ENCODE measurements at regions of chr6 and their contacts with region 1.

Region 1: DNA sequence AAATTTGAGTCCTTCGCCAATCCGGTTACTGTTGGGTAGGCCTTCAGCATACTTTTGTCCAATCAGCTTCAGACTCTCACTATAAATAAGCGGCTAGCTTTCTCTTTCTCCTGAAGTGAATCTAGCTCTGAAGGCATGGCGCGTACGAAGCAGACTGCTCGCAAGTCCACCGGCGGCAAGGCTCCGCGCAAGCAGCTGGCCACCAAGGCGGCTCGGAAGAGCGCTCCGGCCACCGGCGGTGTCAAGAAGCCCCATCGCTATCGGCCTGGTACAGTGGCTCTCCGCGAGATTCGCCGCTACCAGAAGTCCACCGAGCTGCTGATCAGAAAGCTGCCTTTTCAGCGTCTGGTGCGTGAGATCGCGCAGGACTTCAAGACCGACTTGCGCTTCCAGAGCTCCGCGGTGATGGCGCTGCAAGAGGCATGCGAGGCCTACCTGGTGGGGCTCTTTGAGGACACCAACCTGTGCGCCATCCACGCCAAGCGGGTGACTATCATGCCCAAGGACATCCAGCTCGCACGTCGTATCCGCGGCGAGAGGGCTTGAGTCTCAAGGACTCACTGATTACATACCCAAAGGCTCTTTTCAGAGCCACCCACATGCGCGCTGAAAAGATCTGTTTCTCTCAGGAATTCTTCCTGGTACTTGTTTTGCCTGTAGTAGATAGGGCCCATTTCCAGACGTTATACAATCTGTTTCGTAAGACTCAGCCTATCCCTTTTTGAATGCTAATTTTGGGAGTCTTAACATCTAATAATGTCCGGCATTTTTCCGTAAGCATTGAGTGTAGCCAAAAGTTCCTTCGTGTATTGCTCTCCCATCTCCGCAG is 102.0 kb downstream of the OR2B2 start:
- DNase-seq: peak; percentile 64 to 93 (median 88)
- H3K4me3 ChIP-seq: peak overlapping the region; percentile 78
- H3K4me3 Mint-ChIP-seq: peak overlapping the region; percentile 85 to 97 (median 94)
- H3K27ac ChIP-seq: peak overlapping the region; percentile 93
- H3K27ac Mint-ChIP-seq: peak overlapping the region; percentile 94 to 100 (median 97)
- H3K4me1 ChIP-seq: peaks cover 38% of the 10 kb centered on the region
- H3K4me1 Mint-ChIP-seq: peaks cover 54 to 69% (median 65%) of the 10 kb centered on the region in 3 donors
- H3K27me3 ChIP-seq: no peaks in the 10 kb centered on the region
- H3K27me3 Mint-ChIP-seq: peaks cover 0 to 6% of the 10 kb centered on the region in 2 donors

Region 2: DNA sequence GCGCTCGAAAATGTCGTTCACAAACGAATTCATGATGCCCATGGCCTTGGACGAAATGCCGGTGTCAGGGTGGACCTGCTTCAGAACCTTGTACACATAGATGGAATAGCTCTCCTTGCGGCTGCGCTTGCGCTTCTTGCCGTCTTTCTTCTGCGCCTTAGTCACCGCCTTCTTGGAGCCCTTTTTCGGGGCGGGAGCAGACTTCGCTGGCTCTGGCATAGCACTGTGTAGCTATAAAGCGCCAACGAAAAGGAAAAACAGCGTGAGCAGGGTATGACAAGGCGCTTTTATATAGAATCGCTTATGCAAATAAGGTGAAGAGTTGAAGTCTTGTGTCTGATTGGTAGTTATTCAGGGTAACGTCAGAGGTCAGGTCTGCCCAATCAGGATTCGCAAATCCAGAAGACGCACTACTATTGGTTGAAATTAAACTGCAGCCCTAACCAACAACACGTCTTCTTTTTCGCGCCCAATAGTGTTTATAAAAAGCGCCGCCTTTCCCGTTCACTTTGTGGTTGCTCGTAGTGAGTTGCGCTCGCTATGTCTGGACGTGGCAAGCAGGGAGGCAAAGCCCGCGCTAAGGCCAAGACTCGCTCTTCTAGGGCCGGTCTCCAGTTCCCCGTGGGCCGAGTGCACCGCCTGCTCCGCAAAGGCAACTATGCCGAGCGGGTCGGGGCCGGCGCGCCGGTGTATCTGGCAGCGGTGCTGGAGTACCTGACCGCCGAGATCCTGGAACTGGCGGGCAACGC is 677.4 kb before region 1 on chr6:
- CTCF ChIA-PET with region 1: interaction called, 5 read pairs
- POLR2A ChIA-PET with region 1: interaction called, 27 read pairs
- DNase-seq: peak; percentile 77 to 98 (median 96)
- H3K4me3 ChIP-seq: peak overlapping the region; percentile 75
- H3K4me3 Mint-ChIP-seq: no peak overlapping the region
- H3K27ac ChIP-seq: peak overlapping the region; percentile 89
- H3K27ac Mint-ChIP-seq: no peak overlapping the region
- H3K4me1 ChIP-seq: peaks cover 20% of the 10 kb centered on the region
- H3K4me1 Mint-ChIP-seq: peaks cover 7 to 21% (median 16%) of the 10 kb centered on the region in 3 donors
- H3K27me3 ChIP-seq: no peaks in the 10 kb centered on the region
- H3K27me3 Mint-ChIP-seq: peaks cover 0 to 2% of the 10 kb centered on the region in 2 donors

Region 3: GRCh38 chr6:27468334-27468733 is 341.8 kb before region 1 on chr6:
- CTCF ChIA-PET with region 1: no interaction called
- POLR2A ChIA-PET with region 1: no interaction called
- DNase-seq: no peak
- H3K4me3 ChIP-seq: no peak overlapping the region
- H3K4me3 Mint-ChIP-seq: peak overlapping the region in 1 of 7 donors; percentile 22
- H3K27ac ChIP-seq: no peak overlapping the region
- H3K27ac Mint-ChIP-seq: peak overlapping the region in 5 of 8 donors; percentile 18 to 94 (median 28)
- H3K4me1 ChIP-seq: peaks cover 19% of the 10 kb centered on the region
- H3K4me1 Mint-ChIP-seq: peaks cover 65 to 87% (median 78%) of the 10 kb centered on the region in 3 donors
- H3K27me3 ChIP-seq: no peaks in the 10 kb centered on the region
- H3K27me3 Mint-ChIP-seq: peaks cover 0 to 7% of the 10 kb centered on the region in 2 donors

Region 4: DNA sequence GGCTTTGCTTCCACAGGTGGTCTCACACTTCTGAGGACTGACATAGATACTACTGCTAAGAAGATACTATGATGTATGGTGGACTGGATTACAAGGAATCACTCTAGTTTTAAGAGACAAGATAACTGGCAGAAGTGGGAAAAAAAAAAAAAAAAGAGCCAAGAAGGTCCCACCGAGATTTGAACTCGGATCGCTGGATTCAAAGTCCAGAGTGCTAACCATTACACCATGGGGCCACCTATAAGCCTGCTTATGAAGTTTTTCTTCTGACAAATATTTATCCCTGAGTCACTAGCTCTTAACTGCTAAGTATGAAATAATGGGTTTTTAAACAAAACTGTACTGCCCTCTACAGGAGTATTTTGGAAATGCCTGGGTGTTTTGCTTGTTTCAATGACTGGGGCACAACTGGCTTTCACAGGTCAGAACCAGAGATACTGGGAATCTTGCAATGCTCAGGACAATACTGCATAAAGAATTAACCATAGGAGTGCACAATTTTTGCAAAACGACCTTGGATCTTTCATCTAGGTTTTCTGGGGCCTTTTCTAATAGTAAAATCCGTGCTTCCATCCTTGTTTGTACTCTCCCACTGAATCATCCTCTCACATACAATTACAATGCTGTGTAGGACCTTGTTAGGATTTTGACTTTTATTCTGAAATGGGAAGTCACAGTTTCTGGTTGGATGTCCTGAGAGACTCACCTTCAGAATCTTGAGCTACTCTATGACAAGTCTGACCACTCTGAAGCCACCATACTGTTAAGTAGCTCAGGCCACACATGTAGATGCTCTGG is 14.3 kb before region 1 on chr6:
- CTCF ChIA-PET with region 1: interaction called, 63 read pairs
- POLR2A ChIA-PET with region 1: interaction called, 6 read pairs
- DNase-seq: peak in 4 of 5 donors; percentile 39 to 77 (median 64)
- H3K4me3 ChIP-seq: no peak overlapping the region
- H3K4me3 Mint-ChIP-seq: peak overlapping the region in 1 of 7 donors; percentile 40
- H3K27ac ChIP-seq: no peak overlapping the region
- H3K27ac Mint-ChIP-seq: peak overlapping the region in 5 of 8 donors; percentile 3 to 64 (median 53)
- H3K4me1 ChIP-seq: peaks cover 20% of the 10 kb centered on the region
- H3K4me1 Mint-ChIP-seq: peaks cover 22 to 29% (median 28%) of the 10 kb centered on the region in 3 donors
- H3K27me3 ChIP-seq: peaks cover 8% of the 10 kb centered on the region
- H3K27me3 Mint-ChIP-seq: peaks cover 10% of the 10 kb centered on the region in 2 donors

Region 5: DNA sequence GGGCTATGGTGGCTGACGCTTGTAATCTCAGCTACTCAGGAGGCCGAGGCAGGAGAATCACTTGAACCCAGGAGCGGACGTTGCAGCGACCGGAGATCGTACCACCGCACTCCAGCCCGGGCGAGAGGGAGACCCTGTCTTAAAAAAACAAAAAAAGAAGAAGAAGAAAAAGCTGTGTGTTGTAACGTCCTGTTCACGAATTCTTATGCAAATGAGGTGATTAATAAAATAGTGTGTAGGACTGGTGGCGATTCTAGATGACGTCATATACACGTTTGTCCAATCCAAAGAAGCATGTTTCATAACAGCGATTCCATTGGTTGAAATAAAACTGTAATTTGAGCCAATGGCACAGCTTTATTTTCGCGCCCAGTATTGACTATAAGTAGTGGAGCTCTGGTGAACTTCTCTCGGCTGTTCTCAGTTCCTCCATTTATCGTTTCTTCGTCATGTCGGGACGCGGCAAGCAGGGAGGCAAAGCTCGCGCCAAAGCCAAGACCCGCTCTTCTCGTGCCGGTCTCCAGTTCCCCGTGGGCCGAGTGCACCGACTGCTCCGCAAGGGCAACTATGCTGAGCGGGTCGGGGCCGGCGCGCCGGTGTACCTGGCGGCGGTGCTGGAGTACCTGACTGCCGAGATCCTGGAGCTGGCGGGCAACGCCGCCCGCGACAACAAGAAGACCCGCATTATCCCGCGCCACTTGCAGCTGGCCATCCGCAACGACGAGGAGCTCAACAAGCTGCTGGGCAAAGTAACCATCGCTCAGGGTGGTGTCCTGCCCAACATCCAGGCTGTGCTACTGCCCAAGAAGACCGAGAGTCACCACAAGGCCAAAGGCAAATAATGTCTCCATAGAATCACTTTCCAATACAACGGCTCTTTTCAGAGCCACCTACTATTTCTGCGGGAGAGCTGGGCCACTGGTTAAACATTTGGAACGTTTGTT is 55.0 kb after region 1 on chr6:
- CTCF ChIA-PET with region 1: interaction called, 110 read pairs
- POLR2A ChIA-PET with region 1: interaction called, 106 read pairs
- DNase-seq: peak; percentile 42 to 89 (median 81)
- H3K4me3 ChIP-seq: peak overlapping the region; percentile 63
- H3K4me3 Mint-ChIP-seq: peak overlapping the region; percentile 93 to 99 (median 96)
- H3K27ac ChIP-seq: peak overlapping the region; percentile 83
- H3K27ac Mint-ChIP-seq: peak overlapping the region; percentile 87 to 99 (median 97)
- H3K4me1 ChIP-seq: peaks cover 25% of the 10 kb centered on the region
- H3K4me1 Mint-ChIP-seq: peaks cover 36 to 50% (median 45%) of the 10 kb centered on the region in 3 donors
- H3K27me3 ChIP-seq: no peaks in the 10 kb centered on the region
- H3K27me3 Mint-ChIP-seq: no peaks in the 10 kb centered on the region

Measured in CD8-positive, alpha-beta memory T cell (primary cell).